BJ (cell line): ENCODE measurements at regions of chr1 and their contacts with region 1.

Region 1: DNA sequence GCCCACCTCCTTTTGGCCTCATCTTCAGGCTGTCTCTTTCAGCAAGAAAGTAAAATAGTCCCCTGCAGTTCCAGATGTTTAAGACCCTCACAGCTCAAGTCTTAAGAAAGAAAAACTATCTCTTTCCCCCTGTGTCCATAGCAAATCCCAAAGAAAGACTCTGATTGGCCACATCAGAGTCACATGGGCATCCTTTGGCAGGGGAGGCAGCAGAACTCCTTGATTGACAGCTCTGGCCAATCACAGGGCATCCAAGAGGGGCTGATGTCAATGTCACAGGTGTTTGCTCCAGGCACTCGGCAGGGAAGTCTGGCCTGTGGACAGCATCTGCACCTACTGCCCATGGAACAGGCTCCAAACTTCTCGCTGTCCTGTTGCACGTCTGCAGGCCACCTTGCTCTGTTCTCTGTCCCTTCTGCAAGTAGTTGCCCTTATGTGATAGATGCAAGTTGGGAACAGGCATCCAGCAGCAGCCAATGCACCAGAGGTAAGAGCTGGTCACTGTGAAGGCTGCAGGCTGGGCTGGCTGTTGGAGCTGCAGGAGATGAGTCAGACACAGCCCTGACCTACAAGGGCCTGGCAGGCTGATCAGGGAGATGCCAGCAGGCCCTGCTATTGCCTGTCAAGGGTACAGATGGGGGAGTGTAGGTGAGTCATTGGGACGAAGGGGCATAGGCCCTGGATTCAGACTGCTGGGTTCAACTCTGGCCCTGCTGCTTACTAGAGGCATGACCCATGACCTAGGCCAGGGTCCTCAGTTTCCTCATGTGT is 96.8 kb upstream of the TMEM51 start:
- DNase-seq: no peak
- H3K4me3 ChIP-seq: no peak overlapping the region
- H3K27me3 ChIP-seq: no peaks in the 10 kb centered on the region
- CTCF ChIP-seq: no peak

Region 2: GRCh38 chr1:15014516-15014915 is 42.2 kb before region 1 on chr1:
- CTCF ChIA-PET with region 1: no interaction called
- POLR2A ChIA-PET with region 1: no interaction called
- DNase-seq: no peak
- H3K4me3 ChIP-seq: no peak overlapping the region
- H3K27me3 ChIP-seq: no peaks in the 10 kb centered on the region
- CTCF ChIP-seq: no peak

Region 3: GRCh38 chr1:15034656-15035055 is 22.0 kb before region 1 on chr1:
- CTCF ChIA-PET with region 1: no interaction called
- POLR2A ChIA-PET with region 1: no interaction called
- DNase-seq: no peak
- H3K4me3 ChIP-seq: no peak overlapping the region
- H3K27me3 ChIP-seq: no peaks in the 10 kb centered on the region
- CTCF ChIP-seq: no peak

Region 4: GRCh38 chr1:15046487-15047165 is 10.1 kb before region 1 on chr1:
- CTCF ChIA-PET with region 1: interaction called, 18 read pairs
- POLR2A ChIA-PET with region 1: no interaction called
- DNase-seq: peak; percentile 11
- H3K4me3 ChIP-seq: no peak overlapping the region
- H3K27me3 ChIP-seq: no peaks in the 10 kb centered on the region
- CTCF ChIP-seq: peak; percentile 98

Region 5: DNA sequence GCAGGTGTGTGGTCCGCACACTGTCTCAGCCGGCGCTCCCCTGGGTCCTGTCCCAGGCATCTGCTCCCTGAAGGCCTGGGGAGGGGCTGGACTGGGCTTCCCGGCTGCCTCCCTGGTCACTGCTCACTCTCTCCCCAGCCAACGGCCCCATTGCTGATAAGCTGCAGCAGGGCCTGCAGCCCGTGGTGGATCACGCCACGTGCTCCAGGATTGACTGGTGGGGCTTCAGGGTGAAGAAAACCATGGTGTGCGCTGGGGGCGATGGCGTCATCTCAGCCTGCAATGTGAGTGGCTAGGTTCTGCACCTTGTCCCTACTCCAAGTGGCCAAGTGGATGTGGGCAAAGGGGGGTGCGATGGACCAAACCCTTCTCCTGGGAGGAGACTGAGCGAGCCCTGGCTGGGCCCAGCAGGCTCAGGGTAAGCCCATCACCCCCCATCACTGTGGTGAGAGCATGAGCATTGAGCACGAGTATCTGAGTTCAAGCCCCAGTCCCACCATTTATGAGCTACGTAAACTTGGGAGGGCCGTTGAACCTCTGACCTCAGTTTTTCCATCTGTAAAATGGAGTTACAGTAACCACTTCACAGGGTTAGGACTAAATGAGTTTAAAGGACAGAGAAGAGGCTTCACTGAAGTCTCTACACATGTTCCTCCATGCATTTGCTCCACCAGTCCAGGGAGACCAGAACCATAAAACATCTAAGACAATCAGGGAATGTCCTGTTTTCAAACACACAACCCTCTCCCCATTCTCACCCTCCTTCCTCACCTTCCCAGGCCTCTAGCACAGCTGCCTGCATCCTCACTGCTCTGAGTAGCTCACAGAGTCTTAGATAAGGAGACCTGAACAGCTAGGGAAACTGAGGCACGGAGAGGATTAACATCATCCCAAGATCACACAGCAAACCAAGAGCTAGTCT is 388.0 kb after region 1 on chr1:
- CTCF ChIA-PET with region 1: no interaction called
- POLR2A ChIA-PET with region 1: no interaction called
- DNase-seq: no peak
- H3K4me3 ChIP-seq: no peak overlapping the region
- H3K27me3 ChIP-seq: peaks cover 9% of the 10 kb centered on the region
- CTCF ChIP-seq: no peak